ENCODE measurements at regions of chr12 and their contacts with region 1.

Region 1: GRCh38 chr12:56189176-56189917 is at the start of gene SMARCC2:
- DNase-seq: peak; percentile 85 to 91 (median 89)
- H3K4me3 ChIP-seq: peak within 1 kb of the TSS; percentile 93
- H3K27ac ChIP-seq: peak within 1 kb of the TSS; percentile 83 to 93
- H3K4me1 ChIP-seq: peaks cover 3% of the 10 kb centered on the region
- H3K27me3 ChIP-seq: no peaks in the 10 kb centered on the region
- CTCF ChIP-seq: peak; percentile 54 to 89 (median 67)
- EP300 ChIP-seq: no peak
- POLR2A ChIP-seq: peak; percentile 49
- total RNA-seq, gene SMARCC2: 57.9 to 172 (median 117) TPM

Region 2: GRCh38 chr12:56104109-56104814 is 85.1 kb before region 1 on chr12 and contains the start of gene PA2G4:
- intact Hi-C with region 1: no loop called
- DNase-seq: peak; percentile 96 to 98 (median 97)
- H3K4me3 ChIP-seq: peak within 1 kb of the TSS; percentile 94
- H3K27ac ChIP-seq: peak within 1 kb of the TSS; percentile 39 to 76
- H3K4me1 ChIP-seq: peaks cover 4% of the 10 kb centered on the region
- H3K27me3 ChIP-seq: no peaks in the 10 kb centered on the region
- CTCF ChIP-seq: no peak
- EP300 ChIP-seq: peak; percentile 76
- POLR2A ChIP-seq: peak; percentile 82
- total RNA-seq, gene PA2G4: 65.6 to 86.2 (median 77.0) TPM

Region 3: GRCh38 chr12:56117778-56118687 is 71.3 kb before region 1 on chr12 and contains the start of gene ZC3H10:
- intact Hi-C with region 1: loop called in 3 of 4 experiments (anchors 2 kb)
- DNase-seq: peak; percentile 96 to 99 (median 98)
- H3K4me3 ChIP-seq: peak within 1 kb of the TSS; percentile 77
- H3K27ac ChIP-seq: peak within 1 kb of the TSS; percentile 91 to 92
- H3K4me1 ChIP-seq: peaks cover 2% of the 10 kb centered on the region
- H3K27me3 ChIP-seq: no peaks in the 10 kb centered on the region
- CTCF ChIP-seq: peak; percentile 25 to 83 (median 79)
- EP300 ChIP-seq: peak; percentile 89
- POLR2A ChIP-seq: peak; percentile 98
- total RNA-seq, gene ZC3H10: 1.8 to 14.7 (median 10.7) TPM

Region 4: DNA sequence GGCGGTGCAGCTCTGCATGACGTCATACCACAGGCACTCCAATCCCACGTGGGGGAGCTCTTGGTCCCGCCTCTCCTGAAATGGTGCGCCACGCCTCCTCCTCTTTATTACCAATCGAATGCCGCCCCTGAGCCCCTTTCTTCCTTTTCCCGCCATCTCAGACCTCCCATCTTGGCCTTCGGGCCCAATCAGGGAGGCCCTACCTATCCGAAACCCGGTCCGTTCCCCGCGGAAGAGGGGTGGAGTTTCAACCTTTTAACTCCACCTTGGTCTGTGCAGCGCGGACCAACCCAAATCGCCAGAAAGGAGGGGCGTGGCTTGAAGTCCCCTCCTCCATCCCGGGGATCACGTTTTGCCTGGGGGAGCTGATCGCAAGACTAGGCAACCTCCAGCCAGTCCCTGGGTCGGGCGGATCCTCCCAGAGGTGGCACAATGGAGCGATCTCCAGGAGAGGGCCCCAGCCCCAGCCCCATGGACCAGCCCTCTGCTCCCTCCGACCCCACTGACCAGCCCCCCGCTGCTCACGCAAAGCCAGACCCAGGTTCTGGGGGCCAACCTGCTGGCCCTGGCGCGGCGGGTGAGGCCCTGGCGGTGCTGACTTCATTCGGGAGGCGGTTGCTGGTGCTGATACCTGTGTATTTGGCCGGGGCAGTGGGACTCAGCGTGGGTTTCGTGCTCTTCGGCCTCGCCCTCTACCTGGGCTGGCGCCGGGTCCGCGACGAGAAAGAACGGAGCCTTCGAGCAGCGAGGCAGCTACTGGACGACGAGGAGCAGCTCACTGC is 61.3 kb before region 1 on chr12 and contains the start of gene ESYT1:
- intact Hi-C with region 1: loop called in 1 of 4 experiments (anchors 2 kb)
- DNase-seq: peak; percentile 97 to 99 (median 98)
- H3K4me3 ChIP-seq: peak within 1 kb of the TSS; percentile 63
- H3K27ac ChIP-seq: peak within 1 kb of the TSS; percentile 78 to 90
- H3K4me1 ChIP-seq: peaks cover 9% of the 10 kb centered on the region
- H3K27me3 ChIP-seq: no peaks in the 10 kb centered on the region
- CTCF ChIP-seq: peak in 1 of 3 donors; percentile 38
- EP300 ChIP-seq: peak; percentile 48
- POLR2A ChIP-seq: peak; percentile 96
- total RNA-seq, gene ESYT1: 80.3 to 139 (median 97.3) TPM

Region 5: GRCh38 chr12:56158029-56158925 is 31.1 kb before region 1 on chr12 and contains the start of gene MYL6:
- intact Hi-C with region 1: loop called in 1 of 4 experiments (anchors 2 kb)
- DNase-seq: peak; percentile 93 to 98 (median 97)
- H3K4me3 ChIP-seq: peak within 1 kb of the TSS; percentile 97
- H3K27ac ChIP-seq: peak within 1 kb of the TSS; percentile 82 to 91
- H3K4me1 ChIP-seq: peaks cover 3% of the 10 kb centered on the region
- H3K27me3 ChIP-seq: no peaks in the 10 kb centered on the region
- CTCF ChIP-seq: peak in 2 of 3 donors; percentile 4 to 9
- EP300 ChIP-seq: no peak
- POLR2A ChIP-seq: peak; percentile 100
- total RNA-seq, gene MYL6: 782 to 1,485 (median 1,329) TPM

Region 6: GRCh38 chr12:56206457-56207166 is 17.3 kb after region 1 on chr12:
- intact Hi-C with region 1: no loop called
- DNase-seq: peak; percentile 31 to 54 (median 43)
- H3K4me3 ChIP-seq: no peak overlapping the region
- H3K27ac ChIP-seq: no peak overlapping the region
- H3K4me1 ChIP-seq: no peaks in the 10 kb centered on the region
- H3K27me3 ChIP-seq: no peaks in the 10 kb centered on the region
- CTCF ChIP-seq: peak in 2 of 3 donors; percentile 16 to 21
- EP300 ChIP-seq: no peak
- POLR2A ChIP-seq: no peak

Region 7: DNA sequence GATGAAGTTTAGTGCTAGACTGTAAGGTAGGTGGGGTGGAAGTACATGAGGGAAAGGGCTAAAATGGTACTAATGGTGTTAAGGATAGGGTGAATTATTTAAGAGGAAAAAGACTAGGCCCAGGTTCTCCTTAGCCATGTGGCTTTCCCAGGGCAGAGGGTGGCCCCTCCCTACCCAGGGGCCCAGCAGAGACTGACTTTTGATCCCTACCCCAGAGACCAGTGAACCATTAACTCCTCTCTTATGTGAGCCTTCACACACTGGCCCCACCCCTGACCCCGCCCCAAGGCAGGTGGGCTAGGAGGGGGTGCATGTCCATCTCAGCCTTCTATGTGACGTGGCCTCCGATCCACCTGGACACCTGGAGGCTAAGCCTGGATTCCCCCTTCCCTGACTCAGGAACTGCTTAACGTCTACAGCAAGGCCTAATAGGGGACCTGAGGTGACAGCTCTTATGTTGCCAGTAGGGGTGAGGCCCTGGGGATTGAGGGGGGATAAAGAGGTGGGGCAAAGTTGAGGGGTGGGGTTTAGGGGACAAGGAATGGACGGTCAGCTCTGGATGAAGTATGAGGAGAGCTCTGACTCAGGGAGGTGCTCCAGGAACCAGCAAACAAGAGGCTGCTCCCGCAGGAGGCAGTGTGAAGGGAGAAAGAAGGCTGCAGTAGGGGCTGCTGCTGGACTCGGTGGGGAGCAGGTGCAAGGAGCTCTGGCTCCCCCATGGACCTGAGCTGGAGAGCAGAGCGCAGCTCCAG is 41.3 kb after region 1 on chr12:
- intact Hi-C with region 1: loop called in 2 of 4 experiments (anchors 5 kb)
- DNase-seq: no peak
- H3K4me3 ChIP-seq: no peak overlapping the region
- H3K27ac ChIP-seq: no peak overlapping the region
- H3K4me1 ChIP-seq: no peaks in the 10 kb centered on the region
- H3K27me3 ChIP-seq: no peaks in the 10 kb centered on the region
- CTCF ChIP-seq: no peak
- EP300 ChIP-seq: no peak
- POLR2A ChIP-seq: no peak

Region 8: GRCh38 chr12:56299853-56300643 is 110.7 kb after region 1 on chr12 and contains the start of gene CS:
- intact Hi-C with region 1: loop called in 1 of 4 experiments (anchors 10 kb)
- DNase-seq: peak; percentile 98 to 99 (median 99)
- H3K4me3 ChIP-seq: peak within 1 kb of the TSS; percentile 99
- H3K27ac ChIP-seq: peak within 1 kb of the TSS; percentile 53 to 89
- H3K4me1 ChIP-seq: peaks cover 13% of the 10 kb centered on the region
- H3K27me3 ChIP-seq: no peaks in the 10 kb centered on the region
- CTCF ChIP-seq: peak in 1 of 3 donors; percentile 17
- EP300 ChIP-seq: no peak
- POLR2A ChIP-seq: peak; percentile 42
- total RNA-seq, gene CS: 49.6 to 155 (median 137) TPM

Region 9: DNA sequence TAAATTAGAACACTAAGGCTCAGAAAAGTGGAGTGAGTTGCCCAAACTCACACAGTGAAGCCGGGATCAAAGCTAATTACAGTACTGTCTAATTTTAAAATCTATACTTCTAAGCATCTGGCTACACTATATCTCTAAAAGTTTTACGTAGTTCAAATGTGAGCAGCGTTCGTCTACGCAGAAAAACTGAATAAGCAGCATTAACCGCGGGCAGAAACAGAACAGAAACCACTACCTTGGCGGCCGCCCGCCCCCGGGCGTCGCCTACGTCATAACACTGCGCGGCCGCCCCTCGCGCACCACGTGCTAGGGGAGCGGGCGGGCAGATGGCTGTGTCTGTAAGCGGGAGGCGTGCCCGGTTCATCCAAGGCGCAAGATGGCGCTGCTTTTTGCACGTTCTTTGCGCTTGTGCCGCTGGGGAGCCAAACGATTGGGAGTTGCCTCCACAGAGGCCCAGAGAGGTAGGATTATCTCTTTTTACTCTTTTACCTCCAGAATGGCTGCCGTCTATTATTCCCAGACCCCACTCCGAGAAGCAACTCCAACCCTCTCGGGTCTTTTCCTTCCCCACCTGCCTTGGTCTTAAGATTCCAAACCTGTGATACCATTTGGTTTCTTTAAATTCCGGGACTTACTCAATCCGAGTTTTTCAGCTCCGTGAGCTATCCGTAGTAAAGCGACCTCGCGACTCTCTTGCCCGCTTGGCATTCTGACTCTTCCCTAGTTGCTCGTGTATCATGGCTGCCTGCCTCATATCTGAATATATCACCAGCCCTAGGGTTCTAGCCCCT is 279.1 kb after region 1 on chr12 and contains the start of gene SPRYD4:
- intact Hi-C with region 1: loop called in 1 of 4 experiments (anchors 10 kb)
- DNase-seq: peak; percentile 90 to 95 (median 93)
- H3K4me3 ChIP-seq: peak within 1 kb of the TSS; percentile 80
- H3K27ac ChIP-seq: peak within 1 kb of the TSS; percentile 60 to 78
- H3K4me1 ChIP-seq: no peaks in the 10 kb centered on the region
- H3K27me3 ChIP-seq: no peaks in the 10 kb centered on the region
- CTCF ChIP-seq: peak; percentile 8 to 51 (median 30)
- EP300 ChIP-seq: no peak
- POLR2A ChIP-seq: peak; percentile 91
- total RNA-seq, gene SPRYD4: 1.4 to 4.1 (median 3.2) TPM